OCI-LY7 (cell line): ENCODE measurements at regions of chr6 and their contacts with region 1.

Region 1: GRCh38 chr6:158808941-158809678 is 10.1 kb downstream of the EZR start:
- DNase-seq: peak; percentile 97
- H3K4me3 ChIP-seq: peak overlapping the region; percentile 87
- H3K27ac ChIP-seq: peak overlapping the region; percentile 100
- H3K4me1 ChIP-seq: peaks cover 95% of the 10 kb centered on the region
- CTCF ChIP-seq: no peak; the same call in 1 of the 2 replicates

Region 2: GRCh38 chr6:158518191-158519127 is 290.7 kb before region 1 on chr6:
- CTCF ChIA-PET with region 1: no interaction called
- POLR2A ChIA-PET with region 1: no interaction called
- intact Hi-C with region 1: no loop called
- DNase-seq: peak; percentile 87
- H3K4me3 ChIP-seq: peak overlapping the region; percentile 57
- H3K27ac ChIP-seq: no peak overlapping the region
- H3K4me1 ChIP-seq: peaks cover 10% of the 10 kb centered on the region
- CTCF ChIP-seq: peak; percentile 92

Region 3: GRCh38 chr6:158718461-158719046 is 90.6 kb before region 1 on chr6:
- CTCF ChIA-PET with region 1: interaction called, 3 read pairs
- POLR2A ChIA-PET with region 1: interaction called, 3 read pairs
- intact Hi-C with region 1: loop called (anchors 5 kb)
- DNase-seq: peak; percentile 45
- H3K4me3 ChIP-seq: no peak overlapping the region
- H3K27ac ChIP-seq: no peak overlapping the region
- H3K4me1 ChIP-seq: peaks cover 41% of the 10 kb centered on the region
- CTCF ChIP-seq: peak; percentile 88

Region 4: GRCh38 chr6:158793432-158793831 is 15.7 kb before region 1 on chr6:
- CTCF ChIA-PET with region 1: interaction called, 6 read pairs
- POLR2A ChIA-PET with region 1: interaction called, 155 read pairs
- intact Hi-C with region 1: loop called (anchors 2 kb)
- DNase-seq: peak; percentile 69
- H3K4me3 ChIP-seq: peak overlapping the region; percentile 2
- H3K27ac ChIP-seq: peak overlapping the region; percentile 68
- H3K4me1 ChIP-seq: peaks cover 97% of the 10 kb centered on the region
- CTCF ChIP-seq: peak; percentile 85

Region 5: DNA sequence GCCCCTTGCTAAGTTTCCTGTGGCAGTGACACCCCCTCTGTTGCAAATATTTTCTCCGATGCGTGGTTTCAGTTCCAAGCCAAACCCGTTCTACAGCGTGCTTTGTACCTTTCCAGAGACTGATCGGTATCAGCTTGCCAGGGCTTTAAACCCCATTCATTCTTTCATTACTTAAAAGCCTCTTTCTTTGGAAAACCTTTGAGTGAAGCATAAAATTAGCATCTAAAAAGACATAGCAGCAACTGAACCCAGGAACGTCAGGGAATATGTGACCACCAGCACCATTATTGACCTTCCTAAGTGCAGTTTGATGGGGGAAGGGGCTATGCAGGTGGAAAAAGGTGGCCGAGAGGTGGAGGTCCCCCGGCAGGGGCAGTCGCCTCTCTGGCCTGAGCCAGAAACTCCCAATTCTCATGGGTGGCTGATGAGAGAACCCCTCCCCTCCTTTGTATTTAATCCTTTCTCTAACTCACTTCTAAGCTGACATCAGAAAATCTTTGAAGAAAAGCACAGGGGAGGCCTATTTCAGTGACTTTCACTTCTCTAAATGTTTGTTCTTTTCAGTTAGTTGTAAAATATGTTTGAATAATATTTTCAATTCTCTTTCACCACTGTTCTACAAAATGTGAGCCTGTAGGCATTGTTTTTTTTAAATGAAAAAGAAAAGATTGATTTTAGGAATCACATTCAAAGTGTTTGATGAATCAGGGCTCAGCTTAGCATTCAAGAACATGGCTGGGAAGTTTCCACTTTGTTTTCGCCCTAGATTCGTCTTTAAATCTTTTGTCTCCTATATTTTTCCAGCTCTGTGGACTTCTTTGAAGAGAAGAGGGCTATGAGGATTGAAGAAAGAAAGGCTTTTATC is 101.6 kb after region 1 on chr6:
- CTCF ChIA-PET with region 1: no interaction called
- POLR2A ChIA-PET with region 1: interaction called, 18 read pairs
- intact Hi-C with region 1: no loop called
- DNase-seq: peak; percentile 90
- H3K4me3 ChIP-seq: peak overlapping the region; percentile 60
- H3K27ac ChIP-seq: peak overlapping the region; percentile 94
- H3K4me1 ChIP-seq: peaks cover 48% of the 10 kb centered on the region
- CTCF ChIP-seq: peak; percentile 52